ENCODE measurements at regions of chr5 and their contacts with region 1.

Region 1: DNA sequence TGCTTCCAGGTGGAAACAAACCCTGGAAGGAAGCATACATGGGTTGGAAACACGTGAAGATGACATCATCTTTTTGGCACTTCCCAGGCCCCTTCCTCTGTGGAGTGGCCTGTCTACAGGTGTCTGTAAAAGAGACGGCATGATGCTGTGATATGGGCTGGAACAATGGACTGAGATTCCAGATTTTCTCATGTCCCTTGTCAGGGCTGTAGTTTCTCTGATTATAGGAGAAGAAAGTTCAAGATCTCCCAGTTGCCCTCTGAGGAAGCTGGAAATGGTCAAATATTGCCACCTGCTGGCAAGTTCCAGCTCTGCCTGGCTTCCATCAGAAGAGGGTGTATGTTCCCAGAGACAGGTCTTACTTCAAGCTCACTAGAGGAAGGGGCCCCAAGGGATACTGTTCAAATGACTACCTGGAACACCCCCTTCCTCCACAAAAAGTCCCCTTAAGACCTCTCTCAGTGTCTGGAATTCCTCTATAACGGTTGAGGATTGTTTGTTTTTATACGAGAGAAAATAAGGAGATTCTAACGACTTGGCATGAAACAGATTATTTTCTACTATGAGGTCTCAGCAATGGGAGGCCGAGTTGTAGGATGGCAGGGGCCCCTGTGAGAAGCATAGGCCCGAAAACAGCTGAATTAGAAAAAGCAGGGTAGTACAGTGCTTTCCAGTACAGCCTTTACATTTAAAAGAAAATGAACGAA is 7.3 kb upstream of the ANXA6 start:
- DNase-seq: peak; percentile 76
- CTCF ChIP-seq: peak; percentile 93

Region 2: DNA sequence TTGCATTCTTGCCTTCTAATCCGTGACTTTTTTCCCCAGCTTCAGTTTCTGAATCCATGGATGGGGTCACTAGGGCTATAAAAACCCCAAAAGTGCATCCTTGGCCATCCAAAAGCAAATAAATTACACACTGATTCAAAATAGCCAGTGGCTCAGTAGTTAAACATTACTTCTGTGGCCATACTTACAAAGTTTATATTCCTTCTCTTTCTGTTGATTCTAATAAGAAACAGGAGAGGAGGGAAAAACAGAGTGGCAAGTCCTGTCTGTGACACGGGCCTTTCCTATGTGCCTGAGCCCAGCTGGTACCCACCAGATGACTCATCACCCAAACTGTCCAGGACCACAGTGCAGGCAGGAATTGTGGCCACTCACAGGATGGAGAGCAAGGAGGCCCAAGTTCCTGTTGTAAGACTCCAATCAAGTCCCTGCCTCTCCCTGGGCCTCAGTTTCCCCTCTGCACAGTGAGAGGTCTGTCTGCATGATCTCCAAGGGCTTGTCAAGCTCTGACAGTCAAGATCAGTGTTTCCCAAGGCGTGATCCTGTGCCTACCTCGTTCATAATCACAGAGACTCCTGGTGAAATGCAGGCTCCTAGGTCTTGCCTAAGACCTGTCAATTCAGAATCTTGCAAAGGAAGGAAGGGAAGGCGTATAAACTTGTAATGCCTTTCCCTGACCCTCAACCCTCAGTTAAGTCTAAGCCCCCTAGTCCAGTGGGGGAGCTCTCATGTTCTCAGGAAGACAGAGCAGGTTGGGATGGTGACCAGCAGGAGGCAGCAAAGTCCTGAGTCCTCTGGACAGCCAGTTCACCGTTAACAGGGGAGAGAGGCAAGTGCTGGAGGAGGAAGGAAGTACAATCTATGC is 113.5 kb before region 1 on chr5:
- CTCF ChIA-PET with region 1: interaction called, 140 read pairs
- POLR2A ChIA-PET with region 1: no interaction called
- DNase-seq: peak; percentile 79
- CTCF ChIP-seq: peak; percentile 76

Region 3: GRCh38 chr5:151134238-151134637 is 30.6 kb before region 1 on chr5:
- CTCF ChIA-PET with region 1: interaction called, 304 read pairs
- POLR2A ChIA-PET with region 1: interaction called, 3 read pairs
- DNase-seq: no peak
- CTCF ChIP-seq: no peak

Region 4: GRCh38 chr5:151150471-151151262 is 14.2 kb before region 1 on chr5:
- CTCF ChIA-PET with region 1: interaction called, 55 read pairs
- POLR2A ChIA-PET with region 1: no interaction called
- DNase-seq: peak; percentile 54
- CTCF ChIP-seq: no peak

Region 5: DNA sequence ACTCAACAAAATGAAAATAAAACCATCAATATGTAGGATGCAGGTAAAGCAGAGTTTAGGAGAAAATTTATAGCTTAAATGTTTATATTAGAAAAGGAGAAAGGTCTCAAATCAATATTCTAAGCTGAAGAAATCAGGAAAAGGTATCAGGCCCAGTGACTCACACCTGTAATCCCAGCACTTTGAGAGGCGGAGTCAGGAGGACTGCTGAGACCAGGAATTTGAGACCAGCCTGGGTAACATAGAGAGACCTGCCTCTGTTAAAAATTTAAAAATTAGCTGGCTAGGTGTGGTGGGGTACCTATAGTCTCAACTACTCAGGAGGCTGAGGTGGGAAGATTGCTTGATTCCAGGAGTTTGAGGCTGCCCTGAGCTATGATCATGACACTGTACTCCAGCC is 26.8 kb after region 1 on chr5:
- CTCF ChIA-PET with region 1: interaction called, 11 read pairs
- POLR2A ChIA-PET with region 1: interaction called, 4 read pairs
- DNase-seq: no peak
- CTCF ChIP-seq: no peak

Region 6: GRCh38 chr5:151223469-151224264 is 58.8 kb after region 1 on chr5 and contains the start of gene CCDC69:
- CTCF ChIA-PET with region 1: interaction called, 11 read pairs
- POLR2A ChIA-PET with region 1: no interaction called
- DNase-seq: peak; percentile 76
- CTCF ChIP-seq: no peak

Measured in GM10248 (cell line).